HAP-1 (cell line): ENCODE measurements at regions of chr4 and their contacts with region 1.

Region 1: DNA sequence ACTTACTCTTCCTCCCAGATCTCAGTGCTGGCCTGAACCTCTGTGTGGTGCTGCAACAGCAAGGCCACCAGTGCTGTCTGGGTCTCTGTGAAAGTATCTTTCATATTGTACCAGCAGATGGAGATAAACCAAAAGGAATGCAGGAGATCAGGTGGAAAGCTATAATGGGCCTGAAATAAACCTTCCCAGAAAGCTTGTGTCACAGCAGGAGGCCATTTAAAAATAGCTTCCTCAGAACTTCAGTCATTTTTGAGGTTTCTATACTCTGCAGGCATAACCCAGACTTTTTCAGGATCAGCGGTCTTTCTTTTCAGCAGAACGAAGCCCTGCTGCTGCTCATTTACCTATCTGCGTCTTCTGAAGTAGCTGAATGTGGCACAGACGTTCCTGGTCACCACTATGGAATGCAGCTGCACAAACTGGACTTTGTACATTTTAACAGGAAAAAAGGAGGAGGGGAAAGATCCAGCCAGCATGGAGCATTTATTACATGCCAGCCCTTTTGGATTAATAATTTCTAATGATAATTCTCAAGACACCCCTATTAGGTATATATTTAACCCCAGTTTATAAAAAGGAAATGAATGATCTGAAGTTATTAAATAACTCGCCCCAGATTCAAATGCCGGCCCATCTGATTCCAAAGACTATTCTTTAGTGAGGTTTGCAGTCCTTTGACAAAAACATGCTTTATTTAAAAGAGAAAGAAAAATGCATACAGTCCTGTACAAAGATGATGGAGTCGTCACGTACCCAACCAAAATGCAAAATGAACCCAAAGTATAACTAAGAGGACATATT is 119.7 kb downstream of the NFKB1 start:
- DNase-seq: peak; percentile 35 to 51
- H3K4me3 ChIP-seq: no peak overlapping the region
- H3K4me1 ChIP-seq: no peaks in the 10 kb centered on the region
- H3K27me3 ChIP-seq: no peaks in the 10 kb centered on the region

Region 2: DNA sequence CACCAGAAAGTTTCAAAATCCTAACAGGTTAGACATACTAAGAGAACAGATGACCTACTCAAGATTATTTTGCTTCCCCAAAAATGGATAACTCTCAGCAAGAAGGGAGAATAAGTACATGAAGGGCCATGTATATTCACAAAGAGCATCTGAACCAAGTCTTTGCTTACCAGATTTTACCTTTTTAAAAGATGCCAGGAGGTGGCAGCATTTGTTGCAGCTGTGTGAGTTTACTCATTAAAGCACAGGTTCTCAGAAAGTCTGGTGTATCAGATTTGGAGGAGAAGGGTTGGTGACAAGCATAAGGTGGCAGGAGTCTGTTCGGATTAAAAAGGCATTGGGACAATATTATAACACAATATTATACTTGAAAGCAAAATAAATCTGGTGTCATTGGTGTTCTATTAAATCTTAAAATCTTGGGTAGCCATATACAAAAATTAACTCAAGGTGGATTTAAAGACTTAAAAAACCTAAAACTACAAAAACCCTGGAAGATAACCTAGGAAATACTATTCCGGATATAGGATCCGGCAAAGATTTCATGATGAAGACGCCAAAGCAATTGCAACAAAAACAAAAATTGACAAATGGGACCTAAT is 171.0 kb before region 1 on chr4:
- in situ Hi-C with region 1: loop called (anchors 25 kb)
- DNase-seq: peak; percentile 51 to 65
- H3K4me3 ChIP-seq: no peak overlapping the region
- H3K4me1 ChIP-seq: no peaks in the 10 kb centered on the region; the same call in 1 of the 2 replicates
- H3K27me3 ChIP-seq: no peaks in the 10 kb centered on the region

Region 3: GRCh38 chr4:103008875-103009729 is 388.2 kb after region 1 on chr4:
- in situ Hi-C with region 1: loop called (anchors 10 kb)
- DNase-seq: peak; percentile 39 to 77
- H3K4me3 ChIP-seq: no peak overlapping the region
- H3K4me1 ChIP-seq: no peaks in the 10 kb centered on the region; the same call in 1 of the 2 replicates
- H3K27me3 ChIP-seq: peaks cover 5% of the 10 kb centered on the region; the same call in 1 of the 2 replicates

Region 4: DNA sequence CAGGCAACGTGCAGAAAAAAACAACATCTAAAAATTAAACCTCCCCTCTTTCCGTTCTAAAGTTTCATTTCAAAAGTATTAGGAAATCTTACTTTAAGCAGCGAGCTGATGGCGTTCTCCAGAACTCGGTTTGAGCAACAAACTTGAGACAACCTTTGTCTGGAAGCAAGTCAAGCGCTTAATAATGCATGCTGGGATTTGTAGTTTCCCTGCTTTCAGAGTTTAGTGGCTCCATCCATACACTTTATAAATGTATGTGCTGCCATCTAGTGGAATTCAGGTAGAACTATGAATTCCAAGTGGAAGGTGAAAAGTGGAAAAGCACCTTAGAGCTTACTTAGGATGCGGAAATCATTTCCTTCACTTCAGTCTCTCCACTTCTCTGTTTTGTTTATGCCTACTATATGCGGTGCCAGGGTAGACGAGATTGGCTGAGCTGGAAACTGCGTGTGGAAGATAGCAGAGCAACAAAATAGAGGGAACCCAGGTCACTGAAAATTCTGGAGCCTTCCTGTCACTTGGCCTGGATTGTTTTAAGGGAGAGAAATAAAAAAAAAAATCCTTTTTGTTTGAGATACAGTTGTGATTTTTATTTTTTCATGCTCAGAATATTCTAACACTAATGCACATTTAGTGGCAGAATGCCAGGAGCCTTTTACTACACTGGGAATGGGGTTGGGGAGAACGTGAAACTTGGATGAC is 478.9 kb after region 1 on chr4 and contains the start of gene BDH2:
- in situ Hi-C with region 1: loop called (anchors 25 kb)
- DNase-seq: peak; percentile 58 to 96
- H3K4me3 ChIP-seq: peak within 1 kb of the TSS; percentile 31
- H3K4me1 ChIP-seq: peaks cover 22% of the 10 kb centered on the region
- H3K27me3 ChIP-seq: no peaks in the 10 kb centered on the region